GM10248 (cell line): ENCODE measurements at regions of chr3 and their contacts with region 1.

Region 1: DNA sequence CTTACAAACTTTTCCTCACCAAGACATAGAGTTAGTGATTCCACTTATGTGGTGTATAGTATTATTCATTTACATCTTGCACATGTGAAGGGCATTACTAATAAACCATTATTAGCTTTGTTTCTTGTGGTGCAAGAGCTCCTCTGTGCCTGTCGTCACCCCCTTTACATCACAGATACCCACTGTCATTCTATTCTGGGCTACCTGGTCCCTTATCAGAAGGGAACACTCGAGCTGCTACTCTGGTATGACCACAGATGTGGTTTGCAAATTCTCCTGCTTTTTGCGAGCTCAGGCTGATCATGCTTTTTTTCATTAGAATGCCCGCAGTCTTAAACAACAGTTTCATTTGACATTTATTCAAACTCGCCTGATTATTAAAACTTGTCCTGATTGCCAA is 13.9 kb upstream of the SENP2 start:
- DNase-seq: no peak
- CTCF ChIP-seq: no peak

Region 2: DNA sequence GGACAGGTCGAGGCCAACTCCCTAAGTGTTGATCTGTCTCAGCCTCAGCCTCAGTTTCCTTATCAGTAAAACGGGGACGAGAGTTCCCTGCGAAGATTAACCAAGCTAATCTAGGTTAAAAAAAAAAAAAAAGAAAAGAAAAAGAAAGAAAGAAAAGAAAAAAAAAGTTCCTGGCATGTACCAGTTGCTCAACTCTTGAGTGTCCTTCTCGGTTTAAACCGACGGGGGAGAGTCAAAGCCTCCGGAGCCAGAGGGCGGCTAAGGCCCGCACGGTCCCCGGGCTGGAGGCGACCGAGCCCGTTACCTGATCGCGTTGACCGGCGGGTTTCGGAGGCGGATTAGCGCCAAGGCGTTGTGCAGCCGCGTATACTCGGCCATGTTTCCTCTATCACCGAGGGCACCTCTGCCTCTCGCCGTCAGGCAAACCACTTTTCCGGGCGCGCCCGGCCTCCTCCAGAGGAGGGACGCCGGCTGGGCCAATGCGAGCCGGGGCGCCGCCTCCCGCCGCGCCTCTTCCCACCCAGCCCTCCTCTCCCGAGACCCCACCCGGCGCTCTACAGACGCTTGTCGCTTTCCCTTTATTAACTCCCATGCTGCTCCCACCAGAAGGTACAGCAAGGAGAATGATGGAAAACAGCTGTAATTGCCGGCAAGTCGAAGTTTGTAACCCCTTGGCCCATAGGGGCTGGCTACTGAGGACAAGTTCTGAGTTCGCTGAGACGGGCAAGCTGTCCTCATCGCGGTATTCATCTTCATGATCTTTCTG is 318.4 kb before region 1 on chr3 and contains the start of gene EHHADH:
- CTCF ChIA-PET with region 1: no interaction called
- POLR2A ChIA-PET with region 1: no interaction called
- DNase-seq: peak; percentile 62
- CTCF ChIP-seq: no peak

Region 3: DNA sequence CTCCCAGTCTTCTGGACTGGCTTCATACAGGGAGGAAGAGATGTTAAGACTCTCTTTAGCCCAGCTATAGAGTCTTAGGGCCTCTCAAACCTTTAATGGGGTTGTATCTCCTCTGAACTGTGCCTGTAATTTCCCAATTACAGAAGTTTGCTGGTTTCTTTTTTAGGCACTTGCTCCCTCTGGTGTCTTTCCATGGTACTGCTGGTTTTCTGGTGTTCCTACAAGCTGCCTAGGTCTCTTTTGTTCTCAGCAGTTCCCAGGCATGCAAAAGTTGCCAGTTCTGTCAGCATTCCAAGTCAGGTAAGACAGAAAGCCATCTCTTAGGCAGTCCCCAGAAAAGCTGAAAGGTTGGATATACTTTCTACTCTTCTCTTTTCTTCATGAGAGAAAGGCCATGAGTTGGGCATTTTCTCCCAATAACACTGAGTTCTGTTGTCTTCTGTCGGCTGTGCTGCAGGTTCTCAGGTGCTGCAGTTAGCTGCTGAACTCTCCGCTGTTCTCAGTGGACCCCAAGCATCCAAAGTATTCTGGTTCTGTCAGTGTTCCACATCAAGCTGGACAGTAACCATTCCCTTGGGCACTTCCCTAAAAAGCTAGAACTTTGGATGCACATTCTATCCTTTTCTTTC is 263.9 kb before region 1 on chr3:
- CTCF ChIA-PET with region 1: no interaction called
- POLR2A ChIA-PET with region 1: no interaction called
- DNase-seq: peak; percentile 54
- CTCF ChIP-seq: peak; percentile 60

Region 4: DNA sequence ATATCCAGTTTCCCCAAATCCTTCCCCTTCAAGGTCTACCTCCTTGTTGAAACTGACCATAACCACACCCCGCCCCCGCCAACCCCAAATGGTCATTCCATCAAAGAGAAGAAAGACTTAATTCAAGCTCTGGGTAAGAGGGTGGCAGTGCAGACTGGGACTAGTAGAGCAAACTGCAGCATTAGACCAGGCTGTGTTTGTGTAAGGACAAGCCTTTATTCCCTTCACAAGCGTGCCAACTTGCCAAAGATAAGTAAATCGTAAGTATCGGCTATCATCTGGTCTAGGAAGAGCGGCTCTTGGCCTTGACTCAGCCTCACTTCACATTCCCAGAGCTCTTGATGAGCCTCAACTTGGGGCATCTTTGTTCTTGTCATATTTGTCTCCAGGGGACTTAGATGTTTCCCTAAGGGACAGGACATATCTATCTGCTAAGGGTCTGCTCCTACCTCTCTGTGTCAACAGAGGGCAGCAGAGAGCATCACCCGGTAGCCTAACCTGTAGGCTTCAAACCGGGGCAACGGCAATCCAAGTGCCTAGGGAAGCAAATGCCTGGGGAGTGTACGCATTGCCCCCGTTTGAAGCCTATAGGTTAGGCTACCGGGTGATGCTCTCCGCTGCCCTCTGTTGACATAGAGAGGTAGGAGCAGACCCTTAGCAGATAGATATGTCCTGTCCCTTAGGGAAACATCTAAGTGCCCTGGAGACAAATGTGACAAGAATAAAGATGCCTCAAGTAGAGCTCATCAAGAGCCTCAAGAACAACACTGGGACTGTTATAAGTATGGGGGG is 218.2 kb before region 1 on chr3:
- CTCF ChIA-PET with region 1: interaction called, 13 read pairs
- POLR2A ChIA-PET with region 1: no interaction called
- DNase-seq: peak; percentile 74
- CTCF ChIP-seq: peak; percentile 71

Region 5: DNA sequence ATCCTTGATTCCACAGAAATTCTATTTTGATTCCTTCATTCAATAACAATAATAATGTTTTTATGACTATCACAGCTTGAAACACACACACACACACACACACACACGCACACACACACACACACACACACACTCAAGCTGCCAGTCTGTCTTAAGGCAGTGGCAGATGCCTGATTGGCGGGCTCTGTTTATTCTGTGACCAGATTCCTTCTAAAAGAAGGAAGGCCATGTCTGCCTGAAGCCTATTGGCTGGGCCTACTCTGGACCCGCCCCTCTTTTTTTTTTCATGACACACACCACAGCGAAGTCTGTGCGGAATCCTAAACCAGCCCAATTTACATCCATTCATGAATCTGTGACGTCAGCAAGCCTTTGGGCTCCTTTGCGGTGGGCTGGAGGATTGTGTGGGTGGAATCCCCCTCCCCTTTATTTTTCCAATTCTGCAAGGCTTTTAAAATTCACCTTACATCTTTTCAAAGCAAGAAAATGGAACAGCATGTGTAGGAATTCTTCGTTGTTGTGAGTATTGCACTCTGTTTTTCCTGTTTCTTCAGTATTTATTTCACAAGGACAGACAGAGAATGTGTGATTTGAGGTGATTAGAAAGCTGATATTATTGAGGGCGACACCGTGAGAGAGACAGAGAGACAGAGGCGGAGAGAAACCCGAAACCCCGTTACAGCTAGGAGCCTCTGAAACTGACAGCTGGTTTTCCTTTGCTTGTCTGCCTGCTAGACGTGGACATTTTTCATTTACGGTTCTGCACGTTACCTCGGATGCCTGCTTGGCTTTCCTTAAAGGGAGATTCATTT is 209.1 kb before region 1 on chr3 and contains the start of gene MAP3K13:
- CTCF ChIA-PET with region 1: interaction called, 14 read pairs
- POLR2A ChIA-PET with region 1: no interaction called
- DNase-seq: peak; percentile 87
- CTCF ChIP-seq: no peak

Region 6: DNA sequence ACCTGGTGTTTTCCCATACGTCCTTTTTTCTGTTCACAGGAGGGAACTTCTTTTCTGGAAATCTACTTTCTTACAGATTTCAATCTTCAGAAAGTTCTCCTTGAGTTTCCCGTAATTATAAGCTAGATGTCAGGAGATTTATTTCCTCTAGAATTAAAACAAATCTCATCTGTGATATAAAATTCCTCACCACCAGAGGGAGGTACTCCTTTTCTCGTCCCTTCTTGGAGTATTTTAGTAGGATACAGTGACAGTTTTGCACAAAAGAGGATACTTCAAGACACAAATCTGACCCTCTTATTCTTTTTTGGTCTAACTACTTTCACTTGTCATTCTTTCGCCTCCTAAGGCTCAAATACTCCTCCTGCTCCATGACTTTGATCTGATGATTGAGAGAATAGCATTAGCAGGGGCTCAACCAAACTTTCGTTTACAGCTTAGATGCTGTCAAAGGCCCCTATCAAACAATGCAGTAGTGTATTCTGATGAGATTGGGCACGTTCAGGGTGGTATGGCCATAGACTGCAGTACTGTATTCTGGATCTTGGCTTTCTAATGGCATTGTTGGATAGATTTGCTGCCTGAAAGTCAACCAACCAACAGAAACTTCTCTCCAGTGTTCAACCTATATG is 111.3 kb before region 1 on chr3:
- CTCF ChIA-PET with region 1: interaction called, 20 read pairs
- POLR2A ChIA-PET with region 1: no interaction called
- DNase-seq: peak; percentile 14
- CTCF ChIP-seq: peak; percentile 7

Region 7: DNA sequence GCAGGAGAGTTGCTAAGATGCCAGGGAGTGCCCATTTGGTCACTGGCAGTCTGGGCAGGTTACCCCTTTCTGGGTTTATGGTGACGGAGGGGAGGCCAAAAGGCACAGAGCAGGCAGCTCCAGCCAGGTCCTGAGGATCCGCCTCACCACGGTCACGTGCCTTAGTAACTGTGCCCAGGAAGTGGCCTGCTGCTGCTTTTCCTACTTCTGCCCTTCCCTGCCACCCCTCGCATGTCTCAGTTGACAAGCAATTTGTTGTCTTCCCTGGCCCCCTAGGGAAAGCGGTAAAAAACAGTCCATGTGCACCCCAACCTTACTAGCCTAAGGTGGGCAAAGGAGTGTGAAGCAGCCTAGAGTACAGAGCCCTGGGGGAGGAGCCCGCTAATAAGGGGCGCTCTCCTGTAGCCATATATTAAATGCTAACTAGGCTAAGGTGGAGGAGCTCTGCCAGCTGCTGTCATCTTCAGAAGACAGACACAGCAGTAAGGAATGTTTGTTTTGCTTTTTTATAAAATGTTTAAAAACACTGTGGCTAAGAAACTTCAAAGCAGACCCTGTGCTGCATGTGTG is 10.7 kb before region 1 on chr3:
- CTCF ChIA-PET with region 1: interaction called, 40 read pairs
- POLR2A ChIA-PET with region 1: no interaction called
- DNase-seq: no peak
- CTCF ChIP-seq: no peak

Region 8: DNA sequence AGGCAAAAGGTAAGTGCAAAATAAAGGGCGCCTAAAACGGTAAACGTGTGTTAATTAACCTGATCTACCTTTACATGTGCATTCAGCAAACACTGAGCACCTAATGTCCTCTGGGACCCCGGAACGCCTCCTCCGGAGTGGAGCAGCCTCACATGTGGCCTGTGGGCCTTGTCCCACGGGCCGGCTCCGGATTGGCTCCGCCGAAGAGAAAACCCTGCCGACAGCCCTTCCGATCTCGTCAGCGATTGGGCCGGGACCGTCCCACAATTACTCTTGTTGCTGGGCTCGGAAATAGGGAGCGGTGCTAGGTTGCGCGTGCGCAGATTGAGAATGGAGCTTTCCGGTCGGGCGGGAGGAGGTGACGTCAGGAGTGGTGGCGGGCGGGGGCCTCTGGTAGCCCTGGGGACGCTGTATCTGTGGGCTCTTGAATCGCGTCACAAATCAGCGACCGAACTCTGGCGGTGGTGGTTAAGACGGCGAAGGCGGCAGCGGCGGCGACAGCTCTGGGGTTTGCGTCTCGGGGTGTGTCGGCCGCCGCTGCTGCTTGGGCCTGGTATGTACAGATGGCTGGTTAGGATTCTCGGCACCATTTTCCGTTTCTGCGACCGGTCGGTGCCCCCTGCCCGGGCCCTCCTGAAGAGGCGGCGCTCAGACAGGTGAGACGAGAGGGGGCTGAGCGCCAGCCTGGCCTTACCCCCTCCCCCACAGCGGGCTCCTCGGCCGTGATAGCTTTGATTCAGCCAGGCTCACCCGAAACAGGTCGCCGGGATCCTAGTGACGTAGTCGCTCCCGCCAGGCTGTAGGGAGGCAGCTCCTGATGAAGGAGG is 13.9 kb after region 1 on chr3 and contains the start of gene SENP2:
- CTCF ChIA-PET with region 1: interaction called, 19 read pairs
- POLR2A ChIA-PET with region 1: interaction called, 9 read pairs
- DNase-seq: peak; percentile 97
- CTCF ChIP-seq: no peak

Region 9: GRCh38 chr3:185595526-185595925 is 23.3 kb after region 1 on chr3:
- CTCF ChIA-PET with region 1: interaction called, 15 read pairs
- POLR2A ChIA-PET with region 1: no interaction called
- DNase-seq: peak; percentile 53
- CTCF ChIP-seq: no peak